Caco-2 (cell line): ENCODE measurements at regions of chr16 and their contacts with region 1.

Region 1: GRCh38 chr16:75198135-75198600 is 8.8 kb downstream of the CTRB2 start:
- DNase-seq: peak in 1 of 2 experiments; percentile 27
- H3K4me3 ChIP-seq: peak overlapping the region; percentile 21
- H3K4me3 Mint-ChIP-seq: peak overlapping the region; percentile 58
- H3K27ac Mint-ChIP-seq: no peak overlapping the region
- H3K4me1 ChIP-seq: no peaks in the 10 kb centered on the region
- H3K4me1 Mint-ChIP-seq: peaks cover 11% of the 10 kb centered on the region
- H3K27me3 ChIP-seq: no peaks in the 10 kb centered on the region
- H3K27me3 Mint-ChIP-seq: peaks cover 3% of the 10 kb centered on the region
- CTCF ChIP-seq: no peak

Region 2: DNA sequence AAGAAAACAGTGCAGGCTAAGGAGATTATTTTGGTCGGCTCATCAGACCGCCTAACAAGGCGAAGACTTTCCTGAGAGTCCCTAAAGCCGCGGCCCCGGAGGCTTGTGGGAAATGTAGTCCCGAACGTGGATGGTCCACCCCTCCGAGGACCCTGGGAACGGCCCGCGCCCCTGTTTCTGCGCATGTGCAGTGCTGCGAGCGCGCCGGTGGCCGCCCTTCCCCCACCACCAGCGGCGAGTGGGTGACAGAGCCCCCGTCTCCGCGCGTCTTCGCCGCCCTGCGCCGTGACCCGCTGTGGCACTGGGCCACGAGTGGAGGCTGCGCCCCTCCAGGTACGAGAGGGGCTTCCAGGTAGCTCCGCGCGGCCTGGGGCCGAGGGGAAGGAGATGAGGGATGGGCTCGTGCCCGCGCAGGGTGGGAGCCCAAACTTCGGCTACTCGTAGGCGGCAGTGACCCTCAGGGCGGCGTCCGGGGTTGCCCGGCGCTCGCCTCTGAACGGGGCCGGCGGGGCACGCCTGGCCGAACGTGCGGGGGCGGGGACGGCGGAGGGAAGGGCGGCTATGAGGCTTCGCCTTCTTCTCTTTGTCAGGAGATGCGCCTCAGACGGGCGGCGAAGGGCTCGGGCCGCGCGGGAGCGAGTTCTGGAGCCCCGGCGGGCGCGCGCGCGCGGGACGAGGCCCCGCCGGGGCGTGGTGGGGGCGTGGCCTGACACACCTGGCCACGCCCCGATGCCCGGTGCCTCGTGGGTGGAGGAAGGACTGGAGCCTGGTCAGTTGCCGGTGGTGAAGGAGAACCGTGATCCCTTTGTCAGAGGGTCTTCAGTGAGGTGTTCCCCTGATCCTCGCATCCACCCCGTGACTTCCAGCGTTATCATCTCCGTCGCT is 49.6 kb before region 1 on chr16 and contains the start of gene ZFP1:
- CTCF ChIA-PET with region 1: no interaction called
- POLR2A ChIA-PET with region 1: no interaction called
- intact Hi-C with region 1: no loop called
- DNase-seq: peak; percentile 97 to 98
- H3K4me3 ChIP-seq: peak within 1 kb of the TSS; percentile 77
- H3K4me3 Mint-ChIP-seq: peak within 1 kb of the TSS; percentile 87
- H3K27ac Mint-ChIP-seq: peak within 1 kb of the TSS; percentile 78
- H3K4me1 ChIP-seq: no peaks in the 10 kb centered on the region
- H3K4me1 Mint-ChIP-seq: no peaks in the 10 kb centered on the region
- H3K27me3 ChIP-seq: no peaks in the 10 kb centered on the region
- H3K27me3 Mint-ChIP-seq: no peaks in the 10 kb centered on the region
- CTCF ChIP-seq: no peak
- total RNA-seq, gene ZFP1: 11.4 and 14.2 TPM in 2 replicates

Region 3: DNA sequence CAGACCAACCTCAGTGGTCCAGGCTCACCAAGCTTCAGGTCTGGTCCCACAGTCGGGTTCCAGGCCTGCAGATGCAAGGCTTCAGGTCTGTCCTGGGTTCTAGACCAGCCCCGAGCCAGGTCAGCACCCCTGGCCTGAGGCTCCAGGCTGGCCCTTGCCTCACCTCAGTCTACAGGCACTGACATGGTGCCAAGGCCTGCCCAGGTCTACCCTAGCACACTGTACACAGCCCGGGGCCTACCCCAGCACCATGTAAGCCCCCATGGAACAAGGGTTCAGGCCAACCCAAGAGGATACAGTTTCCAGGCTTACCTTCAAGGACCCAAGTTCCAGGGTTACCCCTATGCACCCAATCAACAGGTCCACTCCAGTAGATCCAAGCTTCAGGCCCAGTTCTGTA is 23.1 kb before region 1 on chr16:
- CTCF ChIA-PET with region 1: no interaction called
- POLR2A ChIA-PET with region 1: no interaction called
- intact Hi-C with region 1: no loop called
- DNase-seq: no peak
- H3K4me3 ChIP-seq: no peak overlapping the region
- H3K4me3 Mint-ChIP-seq: no peak overlapping the region
- H3K27ac Mint-ChIP-seq: no peak overlapping the region
- H3K4me1 ChIP-seq: 0 out of 2 replicates have a peak, but pooled peaks cover 4% of the 10 kb centered on the region
- H3K4me1 Mint-ChIP-seq: no peaks in the 10 kb centered on the region
- H3K27me3 ChIP-seq: no peaks in the 10 kb centered on the region
- H3K27me3 Mint-ChIP-seq: no peaks in the 10 kb centered on the region
- CTCF ChIP-seq: no peak

Region 4: GRCh38 chr16:75217371-75217851 is 19.2 kb after region 1 on chr16:
- CTCF ChIA-PET with region 1: interaction called, 7 read pairs
- POLR2A ChIA-PET with region 1: no interaction called
- intact Hi-C with region 1: loop called (anchors 1 kb)
- DNase-seq: no peak
- H3K4me3 ChIP-seq: no peak overlapping the region
- H3K4me3 Mint-ChIP-seq: no peak overlapping the region
- H3K27ac Mint-ChIP-seq: no peak overlapping the region
- H3K4me1 ChIP-seq: 0 out of 2 replicates have a peak, but pooled peaks cover 4% of the 10 kb centered on the region
- H3K4me1 Mint-ChIP-seq: no peaks in the 10 kb centered on the region
- H3K27me3 ChIP-seq: no peaks in the 10 kb centered on the region
- H3K27me3 Mint-ChIP-seq: no peaks in the 10 kb centered on the region
- CTCF ChIP-seq: no peak

Region 5: GRCh38 chr16:75272097-75272551 is 74.0 kb after region 1 on chr16:
- CTCF ChIA-PET with region 1: no interaction called
- POLR2A ChIA-PET with region 1: no interaction called
- intact Hi-C with region 1: no loop called
- DNase-seq: peak in 1 of 2 experiments; percentile 61
- H3K4me3 ChIP-seq: no peak overlapping the region
- H3K4me3 Mint-ChIP-seq: no peak overlapping the region
- H3K27ac Mint-ChIP-seq: no peak overlapping the region
- H3K4me1 ChIP-seq: peaks cover 9% of the 10 kb centered on the region; the same call in 1 of the 2 replicates
- H3K4me1 Mint-ChIP-seq: no peaks in the 10 kb centered on the region
- H3K27me3 ChIP-seq: no peaks in the 10 kb centered on the region
- H3K27me3 Mint-ChIP-seq: no peaks in the 10 kb centered on the region
- CTCF ChIP-seq: no peak

Region 6: GRCh38 chr16:75376475-75377161 is 178.4 kb after region 1 on chr16:
- CTCF ChIA-PET with region 1: interaction called, 4 read pairs
- POLR2A ChIA-PET with region 1: no interaction called
- intact Hi-C with region 1: loop called (anchors 1 kb)
- DNase-seq: peak; percentile 81 to 82
- H3K4me3 ChIP-seq: no peak overlapping the region
- H3K4me3 Mint-ChIP-seq: peak overlapping the region; percentile 12
- H3K27ac Mint-ChIP-seq: peak overlapping the region; percentile 82
- H3K4me1 ChIP-seq: peaks cover 27% of the 10 kb centered on the region
- H3K4me1 Mint-ChIP-seq: peaks cover 29% of the 10 kb centered on the region
- H3K27me3 ChIP-seq: no peaks in the 10 kb centered on the region
- H3K27me3 Mint-ChIP-seq: no peaks in the 10 kb centered on the region
- CTCF ChIP-seq: no peak

Region 7: DNA sequence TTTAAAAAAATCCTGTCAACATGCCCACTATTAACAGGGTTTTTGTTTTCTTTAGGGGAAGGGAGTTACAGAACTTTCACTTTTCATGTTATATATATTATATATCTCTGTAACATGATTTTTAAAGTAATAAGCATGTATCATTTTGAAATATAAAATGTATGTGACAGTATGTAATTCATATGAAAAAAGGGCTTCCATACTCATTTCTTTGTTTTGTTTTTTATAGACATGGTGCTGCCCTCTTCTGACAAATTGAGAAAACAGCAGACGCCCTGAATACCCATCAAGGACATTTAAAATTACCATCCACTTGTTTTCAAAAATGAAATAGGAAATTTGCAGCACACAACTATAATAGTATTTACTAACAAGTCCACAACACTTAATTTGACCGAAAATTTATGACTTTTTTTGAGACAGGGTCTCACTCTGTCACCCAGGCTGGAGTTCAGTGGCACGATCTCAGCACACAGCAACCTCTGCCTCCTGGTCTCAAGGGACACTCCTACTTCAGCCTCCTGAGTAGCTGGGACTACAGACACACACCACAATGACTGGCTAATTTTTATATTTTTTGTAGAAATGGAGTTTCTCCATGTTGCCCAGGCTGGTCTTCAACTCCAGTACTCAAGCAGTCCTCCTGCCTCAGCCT is 204.8 kb after region 1 on chr16:
- CTCF ChIA-PET with region 1: interaction called, 5 read pairs
- POLR2A ChIA-PET with region 1: no interaction called
- intact Hi-C with region 1: loop called (anchors 1 kb)
- DNase-seq: peak in 1 of 2 experiments; percentile 41
- H3K4me3 ChIP-seq: no peak overlapping the region
- H3K4me3 Mint-ChIP-seq: no peak overlapping the region
- H3K27ac Mint-ChIP-seq: no peak overlapping the region
- H3K4me1 ChIP-seq: no peaks in the 10 kb centered on the region
- H3K4me1 Mint-ChIP-seq: no peaks in the 10 kb centered on the region
- H3K27me3 ChIP-seq: no peaks in the 10 kb centered on the region
- H3K27me3 Mint-ChIP-seq: no peaks in the 10 kb centered on the region
- CTCF ChIP-seq: peak; percentile 80 to 85

Region 8: GRCh38 chr16:75464130-75464918 is 266.2 kb after region 1 on chr16 and contains the start of gene TMEM170A:
- CTCF ChIA-PET with region 1: interaction called, 8 read pairs
- POLR2A ChIA-PET with region 1: no interaction called
- intact Hi-C with region 1: loop called (anchors 1 kb)
- DNase-seq: peak; percentile 99 to 100
- H3K4me3 ChIP-seq: peak within 1 kb of the TSS; percentile 100
- H3K4me3 Mint-ChIP-seq: peak within 1 kb of the TSS; percentile 84
- H3K27ac Mint-ChIP-seq: peak within 1 kb of the TSS; percentile 79
- H3K4me1 ChIP-seq: peaks cover 5% of the 10 kb centered on the region
- H3K4me1 Mint-ChIP-seq: peaks cover 12% of the 10 kb centered on the region
- H3K27me3 ChIP-seq: no peaks in the 10 kb centered on the region
- H3K27me3 Mint-ChIP-seq: no peaks in the 10 kb centered on the region
- CTCF ChIP-seq: peak; percentile 100
- total RNA-seq, gene TMEM170A: 57.4 and 63.6 TPM in 2 replicates

Region 9: DNA sequence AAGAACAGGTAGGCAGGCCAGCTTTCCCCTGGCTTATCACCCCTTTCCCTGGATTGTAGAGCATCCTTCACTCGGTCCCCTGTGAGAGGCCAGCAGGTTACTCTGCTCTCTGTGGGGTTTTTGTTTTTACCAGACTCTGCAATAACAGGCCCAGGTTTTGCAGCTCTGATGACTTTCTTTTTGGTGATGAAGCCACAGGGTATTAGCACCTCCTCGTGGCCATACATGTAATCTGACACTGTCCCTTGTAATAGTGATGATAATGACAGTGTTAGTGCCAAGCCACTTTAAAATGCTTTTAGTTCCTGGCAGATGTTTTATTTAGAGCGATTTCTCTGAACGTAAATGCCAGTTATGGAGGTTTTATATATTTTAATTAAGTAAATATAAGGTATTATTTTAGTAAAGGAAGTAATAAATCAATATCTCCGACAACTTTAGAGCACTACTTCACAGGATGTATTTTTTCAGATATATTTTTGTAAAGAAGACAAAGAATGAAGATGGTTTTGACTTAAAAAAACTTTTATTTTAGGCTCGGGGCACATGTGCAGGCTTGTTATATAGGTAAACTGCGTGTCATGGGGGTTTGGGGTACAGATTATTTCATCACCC is 566.1 kb after region 1 on chr16:
- CTCF ChIA-PET with region 1: no interaction called
- POLR2A ChIA-PET with region 1: no interaction called
- intact Hi-C with region 1: loop called (anchors 2 kb)
- DNase-seq: peak; percentile 67 to 73
- H3K4me3 ChIP-seq: no peak overlapping the region
- H3K4me3 Mint-ChIP-seq: no peak overlapping the region
- H3K27ac Mint-ChIP-seq: no peak overlapping the region
- H3K4me1 ChIP-seq: no peaks in the 10 kb centered on the region
- H3K4me1 Mint-ChIP-seq: no peaks in the 10 kb centered on the region
- H3K27me3 ChIP-seq: no peaks in the 10 kb centered on the region
- H3K27me3 Mint-ChIP-seq: peaks cover 10% of the 10 kb centered on the region
- CTCF ChIP-seq: peak; percentile 85 to 90